ENCODE measurements at regions of chr2 and their contacts with region 1.

Region 1: GRCh38 chr2:144332356-144333142 is 187.4 kb downstream of the ZEB2 start:
- DNase-seq: peak; percentile 93
- ATAC-seq: peak; percentile 91
- H3K4me3 Mint-ChIP-seq: peak overlapping the region; percentile 92
- H3K27ac Mint-ChIP-seq: peak overlapping the region; percentile 87
- H3K4me1 Mint-ChIP-seq: peaks cover 22% of the 10 kb centered on the region
- H3K27me3 Mint-ChIP-seq: no peaks in the 10 kb centered on the region
- CTCF ChIP-seq: no peak

Region 2: GRCh38 chr2:144052083-144052482 is 280.5 kb before region 1 on chr2:
- CTCF ChIA-PET with region 1: no interaction called
- POLR2A ChIA-PET with region 1: no interaction called
- intact Hi-C with region 1: no loop called
- DNase-seq: no peak
- ATAC-seq: no peak
- H3K4me3 Mint-ChIP-seq: no peak overlapping the region
- H3K27ac Mint-ChIP-seq: no peak overlapping the region
- H3K4me1 Mint-ChIP-seq: no peaks in the 10 kb centered on the region
- H3K27me3 Mint-ChIP-seq: no peaks in the 10 kb centered on the region
- CTCF ChIP-seq: no peak

Region 3: GRCh38 chr2:144162652-144163051 is 169.9 kb before region 1 on chr2:
- CTCF ChIA-PET with region 1: no interaction called
- POLR2A ChIA-PET with region 1: no interaction called
- intact Hi-C with region 1: loop called (anchors 1 kb)
- DNase-seq: no peak
- ATAC-seq: peak; percentile 56
- H3K4me3 Mint-ChIP-seq: no peak overlapping the region
- H3K27ac Mint-ChIP-seq: no peak overlapping the region
- H3K4me1 Mint-ChIP-seq: peaks cover 7% of the 10 kb centered on the region
- H3K27me3 Mint-ChIP-seq: no peaks in the 10 kb centered on the region
- CTCF ChIP-seq: no peak

Region 4: DNA sequence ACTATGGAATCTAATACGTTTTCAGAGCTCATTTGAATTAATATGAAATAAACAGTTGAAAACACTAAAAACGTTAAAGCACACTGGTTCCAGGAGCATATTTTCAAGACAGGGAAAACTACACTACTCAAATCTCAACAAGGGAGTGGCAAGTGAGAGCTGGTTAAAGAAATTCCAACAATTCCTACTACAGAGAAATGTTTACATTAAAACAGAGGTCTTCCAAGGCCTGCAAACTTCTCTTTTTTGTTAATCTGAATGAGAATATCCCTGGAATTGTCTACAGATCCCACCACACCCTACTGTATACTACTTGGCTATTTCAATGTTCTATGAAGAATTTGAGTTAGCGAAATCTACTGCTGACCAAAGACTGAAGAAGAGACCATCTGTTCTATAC is 44.1 kb before region 1 on chr2:
- CTCF ChIA-PET with region 1: no interaction called
- POLR2A ChIA-PET with region 1: no interaction called
- intact Hi-C with region 1: no loop called
- DNase-seq: no peak
- ATAC-seq: no peak
- H3K4me3 Mint-ChIP-seq: no peak overlapping the region
- H3K27ac Mint-ChIP-seq: no peak overlapping the region
- H3K4me1 Mint-ChIP-seq: peaks cover 8% of the 10 kb centered on the region
- H3K27me3 Mint-ChIP-seq: no peaks in the 10 kb centered on the region
- CTCF ChIP-seq: no peak

Region 5: GRCh38 chr2:144320491-144320890 is 12.1 kb before region 1 on chr2:
- CTCF ChIA-PET with region 1: interaction called, 3 read pairs
- POLR2A ChIA-PET with region 1: interaction called, 5 read pairs
- intact Hi-C with region 1: loop called (anchors 1 kb)
- DNase-seq: no peak
- ATAC-seq: peak; percentile 56
- H3K4me3 Mint-ChIP-seq: no peak overlapping the region
- H3K27ac Mint-ChIP-seq: no peak overlapping the region
- H3K4me1 Mint-ChIP-seq: peaks cover 44% of the 10 kb centered on the region
- H3K27me3 Mint-ChIP-seq: no peaks in the 10 kb centered on the region
- CTCF ChIP-seq: no peak

Region 6: DNA sequence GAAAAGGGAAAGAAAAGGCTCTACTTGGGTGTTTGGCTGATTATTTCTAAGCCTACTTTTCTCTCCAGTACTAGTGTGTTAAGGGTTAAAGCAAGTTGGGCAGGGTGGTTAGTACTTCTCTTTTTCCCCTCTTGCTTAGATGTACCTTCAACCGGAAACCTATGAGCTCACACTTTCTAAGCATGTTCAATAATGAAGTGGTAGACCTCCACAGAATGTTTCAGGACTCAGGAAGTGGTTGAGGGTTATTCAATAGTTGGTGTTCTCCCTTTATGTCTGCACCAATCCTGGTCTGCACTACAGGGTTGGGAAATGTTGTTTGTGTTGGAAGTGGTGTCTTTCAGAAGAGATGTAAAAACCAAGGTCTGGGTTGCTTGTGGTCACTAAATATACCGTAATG is 50.3 kb after region 1 on chr2:
- CTCF ChIA-PET with region 1: no interaction called
- POLR2A ChIA-PET with region 1: interaction called, 5 read pairs
- intact Hi-C with region 1: loop called (anchors 1 kb)
- DNase-seq: no peak
- ATAC-seq: peak; percentile 97
- H3K4me3 Mint-ChIP-seq: peak overlapping the region; percentile 50
- H3K27ac Mint-ChIP-seq: peak overlapping the region; percentile 72
- H3K4me1 Mint-ChIP-seq: peaks cover 44% of the 10 kb centered on the region
- H3K27me3 Mint-ChIP-seq: no peaks in the 10 kb centered on the region
- CTCF ChIP-seq: no peak

Region 7: GRCh38 chr2:144703852-144704708 is 371.5 kb after region 1 on chr2:
- CTCF ChIA-PET with region 1: no interaction called
- POLR2A ChIA-PET with region 1: no interaction called
- intact Hi-C with region 1: loop called (anchors 5 kb)
- DNase-seq: peak; percentile 27
- ATAC-seq: peak; percentile 81
- H3K4me3 Mint-ChIP-seq: peak overlapping the region; percentile 36
- H3K27ac Mint-ChIP-seq: peak overlapping the region; percentile 73
- H3K4me1 Mint-ChIP-seq: peaks cover 51% of the 10 kb centered on the region
- H3K27me3 Mint-ChIP-seq: no peaks in the 10 kb centered on the region
- CTCF ChIP-seq: no peak